MCF 10A (cell line): ENCODE measurements at regions of chr11 and their contacts with region 1.

Region 1: GRCh38 chr11:66855574-66856495 is 1.0 kb upstream of the LRFN4 start:
- DNase-seq: peak; percentile 85
- H3K4me3 Mint-ChIP-seq: peak overlapping the region; percentile 86
- H3K27ac Mint-ChIP-seq: no peak overlapping the region
- H3K4me1 Mint-ChIP-seq: peaks cover 6% of the 10 kb centered on the region
- H3K27me3 Mint-ChIP-seq: no peaks in the 10 kb centered on the region
- CTCF ChIP-seq: no peak

Region 2: DNA sequence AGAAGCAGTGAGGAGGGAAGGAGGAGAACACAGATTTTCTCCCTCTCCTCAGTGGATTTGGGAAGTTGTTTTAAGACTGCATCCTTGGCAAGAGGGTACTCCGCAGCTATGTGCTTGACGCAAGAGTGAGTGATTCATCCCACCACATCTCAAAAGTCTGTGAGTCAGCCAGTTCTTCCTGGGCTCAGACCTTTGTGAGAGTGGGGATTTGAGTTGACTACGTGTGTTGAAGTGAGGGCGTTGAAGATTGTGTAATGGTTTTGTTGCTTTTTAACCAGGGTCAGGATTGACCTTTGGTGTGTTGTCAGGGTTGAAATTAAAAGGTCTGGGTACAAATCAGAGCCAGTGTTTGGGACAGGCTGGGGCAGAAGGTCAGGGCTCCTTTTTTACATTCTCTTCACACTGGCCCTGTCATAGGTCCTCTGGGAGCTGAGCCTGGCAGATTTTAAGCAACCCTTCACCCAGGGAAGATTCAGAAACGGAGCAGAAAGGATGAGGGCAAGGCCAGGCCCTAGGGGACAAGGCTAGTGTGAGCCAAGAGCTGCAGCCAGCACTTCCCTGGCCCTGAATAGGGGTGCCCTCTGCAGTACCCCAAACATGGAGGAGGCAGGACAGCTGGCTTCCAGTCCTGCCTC is 115.1 kb after region 1 on chr11:
- CTCF ChIA-PET with region 1: interaction called, 8 read pairs
- POLR2A ChIA-PET with region 1: interaction called, 5 read pairs
- intact Hi-C with region 1: loop called (anchors 5 kb)
- DNase-seq: peak; percentile 100
- H3K4me3 Mint-ChIP-seq: peak overlapping the region; percentile 7
- H3K27ac Mint-ChIP-seq: peak overlapping the region; percentile 87
- H3K4me1 Mint-ChIP-seq: peaks cover 56% of the 10 kb centered on the region
- H3K27me3 Mint-ChIP-seq: no peaks in the 10 kb centered on the region
- CTCF ChIP-seq: no peak